Posterior cingulate gyrus (tissue), 11 donors: ENCODE measurements at regions of chr2 and their contacts with region 1.

Region 1: DNA sequence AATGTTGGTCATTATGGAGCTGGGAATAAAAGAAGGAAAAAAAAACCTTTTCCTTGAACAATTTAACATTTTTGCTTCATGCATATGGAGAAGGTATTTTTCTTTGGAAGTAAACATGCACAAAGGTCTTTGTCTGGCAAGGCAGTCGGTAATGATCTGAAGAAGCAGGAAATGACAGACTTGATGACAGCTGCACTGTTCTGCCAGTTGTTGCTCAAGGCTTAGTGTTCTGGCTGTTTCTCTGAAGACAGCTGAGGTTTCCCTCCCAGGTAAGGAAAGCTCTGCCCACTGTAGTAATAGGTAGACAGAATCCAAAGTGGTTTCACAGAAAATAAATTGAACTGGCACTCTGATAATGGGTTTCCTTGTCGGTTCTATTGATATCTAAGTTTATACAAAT is 308.4 kb upstream of the GCFC2 start:
- DNase-seq: no peak

Region 2: DNA sequence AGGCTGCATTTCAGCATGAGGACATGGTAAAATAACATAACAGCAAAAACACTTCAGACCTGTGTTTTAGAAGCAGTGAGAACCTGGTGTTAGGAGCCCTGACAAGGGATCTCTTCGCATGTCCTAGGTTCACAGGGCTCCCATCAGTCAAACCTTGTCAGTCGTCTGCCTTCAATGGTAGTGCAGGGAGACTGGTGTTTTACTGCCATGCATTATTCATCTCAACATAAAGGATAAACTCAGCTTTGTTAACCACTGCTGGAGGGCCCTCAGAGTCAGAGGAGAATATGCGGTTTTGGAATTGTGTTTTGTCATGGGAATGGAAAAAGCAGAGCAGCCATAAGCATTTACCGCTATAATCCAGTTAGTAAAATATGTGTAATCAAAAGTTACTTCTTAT is 32.5 kb before region 1 on chr2:
- intact Hi-C with region 1: no loop called
- DNase-seq: no peak

Region 3: DNA sequence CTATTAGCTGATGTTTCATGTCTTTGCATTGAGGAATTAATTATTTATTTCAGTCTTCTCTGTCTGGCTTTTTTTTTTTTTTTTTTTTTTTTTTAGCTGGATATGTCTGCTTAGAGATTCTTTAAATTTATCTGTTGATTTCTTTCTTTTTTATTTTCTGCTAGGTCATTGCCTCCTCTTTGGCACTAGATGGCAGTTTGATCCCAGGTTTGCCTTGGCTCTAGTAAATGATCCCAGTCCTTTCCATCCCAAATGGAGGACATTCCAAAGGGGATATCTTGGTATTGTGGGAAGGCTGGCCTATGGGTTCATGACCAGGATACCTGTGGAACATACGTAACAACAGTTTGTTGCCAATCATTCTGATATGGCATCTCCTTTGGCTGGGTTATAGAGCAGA is 31.1 kb after region 1 on chr2:
- intact Hi-C with region 1: loop called (anchors 1 kb)
- DNase-seq: no peak